Ascending aorta (tissue), 2 donors: ENCODE measurements at regions of chr11 and their contacts with region 1.

Region 1: GRCh38 chr11:8263769-8264410 is at the start of gene LMO1:
- DNase-seq: peak in 1 of 2 donors; percentile 85
- H3K4me3 ChIP-seq: peak within 1 kb of the TSS; percentile 57 to 64
- H3K27ac ChIP-seq: no peak within 1 kb of the TSS
- H3K4me1 ChIP-seq: peaks cover 2 to 12% of the 10 kb centered on the region in 2 donors
- H3K27me3 ChIP-seq: peaks cover 10% of the 10 kb centered on the region
- CTCF ChIP-seq: peak; percentile 54 to 94 (median 88)
- total RNA-seq, gene LMO1: not detected

Region 2: DNA sequence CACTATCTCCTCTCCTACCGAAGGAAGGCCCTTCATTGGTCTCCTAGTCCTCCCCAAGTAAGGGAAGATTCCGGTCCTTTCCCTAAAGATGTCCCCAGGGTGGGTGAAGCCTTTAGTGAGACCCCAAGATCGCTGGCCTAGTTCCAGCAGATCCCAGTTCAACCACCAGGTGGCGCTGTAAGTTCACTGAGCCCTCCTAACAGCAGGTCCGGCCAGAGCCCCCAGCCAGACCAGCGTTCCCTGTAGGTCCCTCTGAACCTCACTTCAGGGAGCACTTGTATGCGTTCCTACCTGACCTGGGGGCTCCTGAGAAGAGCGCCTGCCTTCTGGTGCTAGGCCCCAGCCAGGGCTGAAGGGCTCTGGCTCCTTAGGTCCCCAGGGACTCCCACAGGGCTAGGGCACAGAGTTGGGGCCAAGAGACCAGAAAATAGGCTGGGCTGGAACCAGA is 38.3 kb before region 1 on chr11:
- intact Hi-C with region 1: loop called (anchors 1 kb)
- DNase-seq: peak in 1 of 2 donors; percentile 78
- H3K4me3 ChIP-seq: no peak overlapping the region
- H3K27ac ChIP-seq: no peak overlapping the region
- H3K4me1 ChIP-seq: peaks cover 0 to 4% of the 10 kb centered on the region in 2 donors
- H3K27me3 ChIP-seq: no peaks in the 10 kb centered on the region
- CTCF ChIP-seq: peak; percentile 81 to 90 (median 90)

Region 3: DNA sequence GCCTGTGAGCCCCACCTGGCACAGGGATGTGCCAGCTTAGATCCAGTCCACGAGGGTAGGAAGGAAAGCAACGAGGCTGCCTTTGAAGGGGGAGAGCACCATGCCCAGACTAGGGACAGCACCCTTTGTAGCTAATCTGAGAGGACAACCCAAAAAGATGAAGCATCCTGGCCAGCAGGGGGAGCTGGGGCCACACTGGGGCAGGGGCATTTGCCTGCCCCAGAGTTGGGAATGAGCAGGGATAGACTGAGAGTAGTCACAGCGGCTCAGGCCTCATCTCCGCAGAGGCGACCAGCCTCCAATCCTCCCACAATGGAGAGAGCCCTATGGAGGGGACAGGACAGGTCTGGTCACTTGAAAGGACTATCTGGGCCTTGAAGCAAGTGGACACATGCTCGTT is 16.6 kb before region 1 on chr11:
- intact Hi-C with region 1: loop called (anchors 2 kb)
- DNase-seq: no peak
- H3K4me3 ChIP-seq: no peak overlapping the region
- H3K27ac ChIP-seq: no peak overlapping the region
- H3K4me1 ChIP-seq: no peaks in the 10 kb centered on the region
- H3K27me3 ChIP-seq: no peaks in the 10 kb centered on the region
- CTCF ChIP-seq: peak in 2 of 3 experiments; percentile 8 to 37